Naive thymus-derived CD4-positive, alpha-beta T cell (primary cell): ENCODE measurements at regions of chr5 and their contacts with region 1.

Region 1: DNA sequence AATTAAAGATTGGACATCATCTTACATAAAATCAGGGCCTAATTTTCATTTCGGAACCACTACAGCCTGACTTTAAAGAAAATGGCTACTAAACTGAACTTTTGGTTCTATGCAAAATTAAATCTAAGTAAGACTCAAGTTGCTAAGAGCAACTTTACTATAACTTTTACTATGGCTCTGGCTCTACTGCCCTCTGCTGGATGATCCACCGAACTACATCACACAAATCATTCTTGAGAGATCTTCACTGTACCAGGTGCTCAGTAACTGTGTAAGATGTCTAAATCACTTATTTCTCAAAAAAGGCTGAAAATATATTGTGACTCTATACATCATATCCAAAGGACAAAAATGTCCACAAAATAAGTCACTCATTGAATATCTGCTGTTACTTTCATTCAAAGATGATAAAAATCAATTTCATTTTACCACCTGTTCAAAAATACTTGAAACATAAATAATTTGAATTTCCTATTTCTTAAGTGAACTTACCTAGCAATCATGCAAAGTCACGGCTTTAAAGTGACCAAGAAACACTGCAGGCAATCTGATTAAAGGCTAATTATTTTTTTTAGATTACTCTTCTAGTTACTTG is 13.5 kb downstream of the MOCS2 start:
- DNase-seq: peak; percentile 17 to 69 (median 59)
- ATAC-seq: peak; percentile 96
- H3K4me3 ChIP-seq: no peak overlapping the region
- H3K4me3 Mint-ChIP-seq: no peak overlapping the region
- H3K27ac ChIP-seq: no peak overlapping the region
- H3K27ac Mint-ChIP-seq: peak overlapping the region in 3 of 9 donors; percentile 41 to 64 (median 53)
- H3K4me1 ChIP-seq: no peaks in the 10 kb centered on the region
- H3K4me1 Mint-ChIP-seq: peaks cover 0 to 28% (median 3%) of the 10 kb centered on the region in 7 donors
- H3K27me3 ChIP-seq: no peaks in the 10 kb centered on the region
- H3K27me3 Mint-ChIP-seq: no peaks in the 10 kb centered on the region

Region 2: GRCh38 chr5:52693280-52693679 is 402.7 kb before region 1 on chr5:
- CTCF ChIA-PET with region 1: interaction called, 3 read pairs
- POLR2A ChIA-PET with region 1: no interaction called
- intact Hi-C with region 1: loop called in 1 of 2 experiments (anchors 10 kb)
- DNase-seq: peak in 7 of 9 donors; percentile 10 to 27 (median 25)
- ATAC-seq: peak; percentile 48
- H3K4me3 ChIP-seq: no peak overlapping the region
- H3K4me3 Mint-ChIP-seq: no peak overlapping the region
- H3K27ac ChIP-seq: no peak overlapping the region
- H3K27ac Mint-ChIP-seq: peak overlapping the region in 2 of 9 donors; percentile 1 to 18
- H3K4me1 ChIP-seq: no peaks in the 10 kb centered on the region
- H3K4me1 Mint-ChIP-seq: peaks cover 0 to 17% (median 7%) of the 10 kb centered on the region in 7 donors
- H3K27me3 ChIP-seq: no peaks in the 10 kb centered on the region
- H3K27me3 Mint-ChIP-seq: peaks cover 0 to 26% (median 0%) of the 10 kb centered on the region in 5 donors

Region 3: GRCh38 chr5:54217826-54218503 is 1121.9 kb after region 1 on chr5:
- CTCF ChIA-PET with region 1: no interaction called
- POLR2A ChIA-PET with region 1: no interaction called
- intact Hi-C with region 1: loop called in 1 of 2 experiments (anchors 1 kb)
- DNase-seq: peak in 3 of 9 donors; percentile 8 to 37 (median 28)
- ATAC-seq: peak; percentile 51
- H3K4me3 ChIP-seq: no peak overlapping the region
- H3K4me3 Mint-ChIP-seq: no peak overlapping the region
- H3K27ac ChIP-seq: no peak overlapping the region
- H3K27ac Mint-ChIP-seq: no peak overlapping the region
- H3K4me1 ChIP-seq: no peaks in the 10 kb centered on the region
- H3K4me1 Mint-ChIP-seq: peaks cover 0 to 23% (median 10%) of the 10 kb centered on the region in 7 donors
- H3K27me3 ChIP-seq: no peaks in the 10 kb centered on the region
- H3K27me3 Mint-ChIP-seq: peaks cover 0 to 2% (median 0%) of the 10 kb centered on the region in 5 donors